PC-9 (cell line): ENCODE measurements at regions of chr20 and their contacts with region 1.

Region 1: GRCh38 chr20:18456600-18456999 is 10.2 kb downstream of the DZANK1 start:
- DNase-seq: no peak
- H3K4me3 ChIP-seq: no peak overlapping the region
- H3K27ac ChIP-seq: no peak overlapping the region
- H3K4me1 ChIP-seq: no peaks in the 10 kb centered on the region
- H3K27me3 ChIP-seq: no peaks in the 10 kb centered on the region
- CTCF ChIP-seq: no peak

Region 2: DNA sequence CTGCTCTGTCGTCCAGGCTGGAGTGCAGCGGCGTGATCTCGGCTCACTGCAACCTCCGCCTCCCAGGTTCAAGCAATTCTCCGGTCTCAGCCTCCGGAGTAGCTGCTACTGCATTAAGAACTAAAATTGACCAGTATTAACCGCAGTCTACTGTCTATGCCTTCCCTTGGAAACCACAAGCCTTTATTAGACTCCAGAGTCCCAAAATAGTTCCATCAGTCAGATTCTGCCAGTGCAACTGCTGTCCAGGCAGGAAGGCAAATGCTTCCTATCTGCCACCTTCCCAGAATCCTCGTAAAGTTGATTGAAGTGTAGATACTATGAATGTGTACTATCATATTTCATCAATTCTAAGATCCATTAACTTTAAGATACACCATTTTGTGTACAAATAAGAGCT is 302.3 kb before region 1 on chr20:
- CTCF ChIA-PET with region 1: no interaction called
- POLR2A ChIA-PET with region 1: no interaction called
- intact Hi-C with region 1: no loop called
- DNase-seq: no peak
- H3K4me3 ChIP-seq: no peak overlapping the region
- H3K27ac ChIP-seq: no peak overlapping the region
- H3K4me1 ChIP-seq: no peaks in the 10 kb centered on the region
- H3K27me3 ChIP-seq: no peaks in the 10 kb centered on the region
- CTCF ChIP-seq: no peak

Region 3: DNA sequence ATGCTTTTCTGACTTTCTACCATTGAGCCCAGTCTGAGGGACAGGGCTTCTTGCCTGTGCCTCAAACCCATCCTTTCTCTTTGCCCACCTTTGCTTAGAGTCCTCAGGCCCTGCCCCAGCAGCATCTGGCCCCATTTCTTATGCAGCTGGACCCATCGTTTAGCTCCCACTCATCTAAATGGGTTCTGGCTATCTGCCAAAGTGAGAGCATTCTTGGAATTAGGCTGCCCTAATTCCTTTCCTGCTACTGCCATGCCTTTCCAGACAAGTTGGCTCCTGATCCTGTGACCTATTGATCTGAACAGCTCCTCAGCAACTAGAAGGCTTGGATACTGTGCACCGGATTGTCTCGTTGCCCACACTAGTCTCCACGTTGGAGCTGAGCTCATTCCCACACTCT is 12.8 kb before region 1 on chr20:
- CTCF ChIA-PET with region 1: no interaction called
- POLR2A ChIA-PET with region 1: interaction called, 11 read pairs
- intact Hi-C with region 1: no loop called
- DNase-seq: no peak
- H3K4me3 ChIP-seq: no peak overlapping the region
- H3K27ac ChIP-seq: no peak overlapping the region
- H3K4me1 ChIP-seq: no peaks in the 10 kb centered on the region
- H3K27me3 ChIP-seq: no peaks in the 10 kb centered on the region
- CTCF ChIP-seq: no peak

Region 4: GRCh38 chr20:18507218-18508021 is 50.8 kb after region 1 on chr20 and contains the start of gene SEC23B:
- CTCF ChIA-PET with region 1: no interaction called
- POLR2A ChIA-PET with region 1: no interaction called
- intact Hi-C with region 1: no loop called
- DNase-seq: peak; percentile 97 to 98
- H3K4me3 ChIP-seq: peak within 1 kb of the TSS; percentile 61
- H3K27ac ChIP-seq: peak within 1 kb of the TSS; percentile 92
- H3K4me1 ChIP-seq: peaks cover 18% of the 10 kb centered on the region
- H3K27me3 ChIP-seq: no peaks in the 10 kb centered on the region
- CTCF ChIP-seq: no peak
- total RNA-seq, gene SEC23B: 60.3 and 78.5 TPM in 2 replicates

Region 5: DNA sequence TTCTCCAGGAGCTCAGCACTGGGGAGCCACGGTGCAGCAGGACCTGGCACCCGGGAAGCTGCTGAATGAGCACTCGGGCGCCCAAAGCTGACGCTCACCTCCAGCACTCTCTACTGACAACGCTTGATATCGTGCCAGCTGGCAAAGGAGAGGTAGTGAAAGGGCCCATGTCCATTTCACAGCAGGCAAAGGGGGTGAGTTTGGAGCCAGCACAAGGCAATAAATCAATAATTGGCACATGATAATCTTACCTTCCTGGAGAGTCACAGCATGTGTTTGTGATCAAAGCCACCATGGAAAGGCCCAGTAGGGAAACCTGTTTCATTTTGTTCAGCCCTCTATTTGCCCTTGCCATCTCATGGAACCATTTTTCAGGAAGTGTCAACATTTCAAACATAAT is 87.3 kb after region 1 on chr20:
- CTCF ChIA-PET with region 1: no interaction called
- POLR2A ChIA-PET with region 1: no interaction called
- intact Hi-C with region 1: no loop called
- DNase-seq: no peak
- H3K4me3 ChIP-seq: no peak overlapping the region
- H3K27ac ChIP-seq: no peak overlapping the region
- H3K4me1 ChIP-seq: no peaks in the 10 kb centered on the region
- H3K27me3 ChIP-seq: no peaks in the 10 kb centered on the region
- CTCF ChIP-seq: no peak